ENCODE measurements at regions of chr11 and their contacts with region 1.

Region 1: GRCh38 chr11:68030318-68031138 is at the start of gene NDUFS8:
- DNase-seq: peak; percentile 99
- H3K4me3 ChIP-seq: peak within 1 kb of the TSS; percentile 60 to 93 (median 75)
- H3K27ac ChIP-seq: peak within 1 kb of the TSS; percentile 83 to 95 (median 92)
- H3K4me1 ChIP-seq: peaks cover 0 to 32% (median 27%) of the 10 kb centered on the region in 4 donors
- H3K27me3 ChIP-seq: no peaks in the 10 kb centered on the region
- CTCF ChIP-seq: no peak
- EP300 ChIP-seq: no peak
- POLR2A ChIP-seq: peak in 1 of 2 donors; percentile 47
- total RNA-seq, gene NDUFS8: 174 to 255 (median 212) TPM

Region 2: GRCh38 chr11:68010090-68011041 is 20.2 kb before region 1 on chr11 and contains the start of gene ALDH3B1:
- intact Hi-C with region 1: loop called (anchors 2 kb)
- DNase-seq: peak; percentile 96
- H3K4me3 ChIP-seq: peak within 1 kb of the TSS; percentile 19 to 50 (median 41)
- H3K27ac ChIP-seq: peak within 1 kb of the TSS; percentile 87 to 93 (median 90)
- H3K4me1 ChIP-seq: peaks cover 0 to 67% (median 54%) of the 10 kb centered on the region in 4 donors
- H3K27me3 ChIP-seq: no peaks in the 10 kb centered on the region
- CTCF ChIP-seq: no peak
- EP300 ChIP-seq: no peak
- POLR2A ChIP-seq: peak; percentile 15 to 38
- total RNA-seq, gene ALDH3B1: 9.4 to 14.7 (median 11.7) TPM

Measured in sigmoid colon (tissue), 7 donors.